Endothelial cell of umbilical vein (primary cell): ENCODE measurements at regions of chr12 and their contacts with region 1.

Region 1: DNA sequence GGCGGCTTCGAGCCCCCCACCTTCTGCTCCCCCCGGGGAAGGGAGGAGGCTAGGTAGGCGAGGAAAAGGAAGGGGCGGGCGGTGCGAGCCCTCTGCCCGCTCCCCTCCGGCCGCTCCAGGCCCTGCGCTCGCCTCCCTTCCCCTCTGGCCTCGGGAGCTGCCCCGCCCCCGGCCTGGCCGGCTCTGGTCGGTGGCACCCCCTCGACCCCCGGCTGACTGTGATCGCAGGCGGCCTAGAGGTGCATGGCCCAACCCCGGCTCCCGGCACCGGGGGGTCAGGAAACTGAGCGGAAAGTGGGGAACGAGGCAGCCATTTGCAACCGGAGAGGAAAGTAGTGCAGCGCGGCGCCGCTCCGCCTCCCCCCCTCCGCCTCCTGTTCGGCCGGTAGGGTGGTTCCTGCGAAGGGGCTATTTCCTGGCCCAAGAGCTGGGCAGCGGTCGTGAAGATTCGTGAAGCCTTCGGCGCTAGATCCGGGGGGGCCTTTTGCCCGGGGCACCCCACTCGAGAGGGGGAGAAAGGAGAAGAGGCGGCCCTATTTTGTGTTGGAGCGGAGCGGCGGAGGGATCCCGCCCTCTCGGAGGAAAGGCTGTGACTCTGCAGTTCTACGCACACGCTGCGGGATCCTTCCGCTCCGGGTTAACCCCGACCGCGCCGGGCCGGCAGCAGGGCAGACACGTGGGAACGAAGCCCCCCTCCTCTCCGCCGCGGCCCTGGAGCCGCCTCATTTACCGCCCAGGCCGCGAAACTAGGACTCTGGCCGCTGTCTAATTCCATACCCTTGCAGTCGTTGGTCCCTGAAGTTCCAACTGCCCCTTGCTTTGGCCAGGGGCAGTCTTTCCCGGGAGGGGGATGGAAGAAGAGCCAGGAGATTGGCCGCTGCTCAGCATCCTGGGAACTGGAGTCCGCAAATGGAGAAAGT is at the start of gene KMT2D:
- DNase-seq: peak; percentile 92
- H3K4me3 ChIP-seq: peak within 1 kb of the TSS; percentile 73 to 97 (median 77)
- H3K27ac ChIP-seq: peak within 1 kb of the TSS; percentile 93
- H3K4me1 ChIP-seq: peaks cover 39% of the 10 kb centered on the region
- H3K27me3 ChIP-seq: no peaks in the 10 kb centered on the region
- CTCF ChIP-seq: peak; percentile 6 to 13
- POLR2A ChIP-seq: peak; percentile 85
- total RNA-seq, gene KMT2D: 106 and 120 TPM in 2 replicates

Region 2: DNA sequence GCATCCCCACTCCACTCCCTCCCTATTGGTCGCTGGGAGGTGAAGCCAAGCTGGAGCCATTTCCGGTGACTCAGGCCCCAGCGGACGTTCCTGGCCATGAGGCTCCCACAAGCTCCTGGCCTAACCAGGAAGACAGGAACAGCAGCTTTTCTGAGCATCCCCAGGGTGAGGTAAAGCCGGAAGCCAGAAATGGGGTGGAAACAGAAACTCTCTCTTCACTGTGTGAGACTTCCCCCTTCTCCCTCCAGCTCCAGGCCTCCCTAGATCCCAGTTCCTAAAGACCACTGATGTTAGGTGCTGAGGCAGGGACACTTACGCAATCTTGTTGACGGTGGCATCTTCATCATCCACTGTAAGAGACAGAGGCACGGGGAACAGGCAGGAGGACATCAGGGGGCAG is 45.1 kb after region 1 on chr12:
- CTCF ChIA-PET with region 1: interaction called, 179 read pairs
- POLR2A ChIA-PET with region 1: interaction called, 3 read pairs
- dilution Hi-C with region 1: no loop called
- intact Hi-C with region 1: no loop called
- DNase-seq: peak; percentile 37
- H3K4me3 ChIP-seq: no peak overlapping the region
- H3K27ac ChIP-seq: peak overlapping the region; percentile 54
- H3K4me1 ChIP-seq: peaks cover 38% of the 10 kb centered on the region
- H3K27me3 ChIP-seq: no peaks in the 10 kb centered on the region
- CTCF ChIP-seq: no peak
- POLR2A ChIP-seq: no peak

Region 3: GRCh38 chr12:49110464-49111155 is 50.1 kb after region 1 on chr12 and contains the start of gene LMBR1L:
- CTCF ChIA-PET with region 1: interaction called, 16 read pairs
- POLR2A ChIA-PET with region 1: interaction called, 5 read pairs
- dilution Hi-C with region 1: no loop called
- intact Hi-C with region 1: no loop called
- DNase-seq: peak; percentile 98
- H3K4me3 ChIP-seq: peak within 1 kb of the TSS; percentile 36 to 92 (median 68)
- H3K27ac ChIP-seq: peak within 1 kb of the TSS; percentile 36
- H3K4me1 ChIP-seq: peaks cover 20% of the 10 kb centered on the region
- H3K27me3 ChIP-seq: no peaks in the 10 kb centered on the region
- CTCF ChIP-seq: peak in 1 of 2 donors; percentile 43
- POLR2A ChIP-seq: peak; percentile 74
- total RNA-seq, gene LMBR1L: 92.8 and 106 TPM in 2 replicates